ENCODE measurements at regions of chr14 and their contacts with region 1.

Region 1: DNA sequence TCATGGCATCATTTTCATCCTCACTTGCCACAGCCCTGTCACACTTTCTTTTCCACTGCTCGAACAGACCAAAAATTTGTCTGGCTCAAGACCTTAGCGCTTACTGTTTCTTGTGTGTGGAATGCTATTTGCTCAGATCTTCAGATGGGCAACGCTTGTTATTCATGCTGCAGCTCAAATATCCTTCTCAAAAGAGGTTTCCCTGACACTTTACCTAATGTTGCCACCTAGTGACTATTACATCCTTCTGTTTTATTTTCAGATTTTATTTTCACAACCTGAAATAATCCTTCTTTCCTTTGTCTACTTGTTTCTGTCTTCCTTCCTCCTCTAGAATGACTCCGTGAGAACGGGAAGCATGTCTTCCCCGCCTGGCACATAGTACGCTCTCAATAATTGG is 5.6 kb downstream of the FBXO33 start:
- DNase-seq: no peak
- H3K4me3 ChIP-seq: no peak overlapping the region
- H3K27ac ChIP-seq: peak overlapping the region in 1 of 5 donors; percentile 28
- H3K4me1 ChIP-seq: peaks cover 25 to 69% of the 10 kb centered on the region in 2 donors
- H3K27me3 ChIP-seq: no peaks in the 10 kb centered on the region
- CTCF ChIP-seq: peak in 5 of 6 experiments; percentile 20 to 50 (median 40)
- POLR2A ChIP-seq: peak in 1 of 2 donors; percentile 16

Region 2: GRCh38 chr14:39157491-39157890 is 269.1 kb before region 1 on chr14:
- intact Hi-C with region 1: no loop called
- DNase-seq: no peak
- H3K4me3 ChIP-seq: no peak overlapping the region
- H3K27ac ChIP-seq: no peak overlapping the region
- H3K4me1 ChIP-seq: peaks cover 0 to 6% of the 10 kb centered on the region in 2 donors
- H3K27me3 ChIP-seq: no peaks in the 10 kb centered on the region
- CTCF ChIP-seq: no peak
- POLR2A ChIP-seq: no peak

Region 3: GRCh38 chr14:39217214-39217879 is 209.3 kb before region 1 on chr14:
- intact Hi-C with region 1: no loop called
- DNase-seq: no peak
- H3K4me3 ChIP-seq: no peak overlapping the region
- H3K27ac ChIP-seq: no peak overlapping the region
- H3K4me1 ChIP-seq: peaks cover 7 to 10% of the 10 kb centered on the region in 2 donors
- H3K27me3 ChIP-seq: no peaks in the 10 kb centered on the region
- CTCF ChIP-seq: no peak
- POLR2A ChIP-seq: no peak

Region 4: GRCh38 chr14:39376667-39377403 is 49.8 kb before region 1 on chr14:
- intact Hi-C with region 1: loop called in 1 of 2 experiments (anchors 10 kb)
- DNase-seq: peak in 2 of 7 donors; percentile 41 to 42
- H3K4me3 ChIP-seq: peak overlapping the region in 1 of 4 donors; percentile 36
- H3K27ac ChIP-seq: peak overlapping the region; percentile 73 to 96 (median 89)
- H3K4me1 ChIP-seq: peaks cover 24 to 36% of the 10 kb centered on the region in 2 donors
- H3K27me3 ChIP-seq: no peaks in the 10 kb centered on the region
- CTCF ChIP-seq: no peak
- POLR2A ChIP-seq: peak in 1 of 2 donors; percentile 41

Region 5: DNA sequence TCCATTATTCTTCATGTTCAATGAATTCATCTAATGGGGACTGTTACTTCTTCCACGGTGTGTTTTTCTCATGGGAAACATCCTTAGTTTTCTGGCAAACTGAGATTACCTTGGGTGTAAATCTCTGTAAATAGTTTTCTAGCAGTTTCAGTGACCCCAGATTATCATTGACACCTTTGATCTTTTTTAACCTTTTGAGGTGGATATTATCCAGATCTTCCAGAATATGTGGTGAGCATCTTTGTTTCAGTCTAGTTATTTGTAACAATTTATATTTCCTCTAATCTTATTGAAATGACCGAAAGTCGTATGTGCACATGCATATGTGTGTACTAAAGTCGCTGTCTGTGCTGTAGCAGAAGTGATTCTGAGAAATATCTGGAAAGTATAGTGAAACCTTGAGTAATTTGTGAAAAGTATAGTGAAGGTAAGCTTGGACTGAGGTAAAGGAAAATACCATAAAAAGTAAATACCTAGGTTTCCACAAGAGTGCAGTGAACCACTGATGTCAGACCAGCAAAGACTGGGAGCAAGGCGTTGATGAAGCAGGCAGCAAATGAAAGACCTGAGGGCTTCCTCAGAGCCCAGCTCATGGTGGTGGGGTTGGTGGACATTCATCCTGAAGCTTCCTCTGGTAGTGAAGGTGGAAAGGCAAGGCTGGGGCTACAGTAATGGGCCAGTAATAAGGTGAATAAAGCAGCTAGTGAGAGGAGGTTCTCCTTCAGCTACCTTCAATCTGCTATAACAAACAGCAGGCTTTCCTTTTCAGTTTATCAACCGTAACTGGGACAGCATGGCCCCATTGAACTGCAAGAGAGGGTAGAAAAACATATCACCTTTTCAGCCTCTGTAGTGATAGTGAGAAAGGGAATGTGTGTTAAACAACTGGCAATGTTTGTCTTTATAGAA is 485.8 kb after region 1 on chr14:
- intact Hi-C with region 1: no loop called
- DNase-seq: no peak
- H3K4me3 ChIP-seq: no peak overlapping the region
- H3K27ac ChIP-seq: no peak overlapping the region
- H3K4me1 ChIP-seq: no peaks in the 10 kb centered on the region
- H3K27me3 ChIP-seq: no peaks in the 10 kb centered on the region
- CTCF ChIP-seq: no peak
- POLR2A ChIP-seq: no peak

Measured in adrenal gland (tissue), 19 donors.